ENCODE measurements at regions of chr12 and their contacts with region 1.

Region 1: DNA sequence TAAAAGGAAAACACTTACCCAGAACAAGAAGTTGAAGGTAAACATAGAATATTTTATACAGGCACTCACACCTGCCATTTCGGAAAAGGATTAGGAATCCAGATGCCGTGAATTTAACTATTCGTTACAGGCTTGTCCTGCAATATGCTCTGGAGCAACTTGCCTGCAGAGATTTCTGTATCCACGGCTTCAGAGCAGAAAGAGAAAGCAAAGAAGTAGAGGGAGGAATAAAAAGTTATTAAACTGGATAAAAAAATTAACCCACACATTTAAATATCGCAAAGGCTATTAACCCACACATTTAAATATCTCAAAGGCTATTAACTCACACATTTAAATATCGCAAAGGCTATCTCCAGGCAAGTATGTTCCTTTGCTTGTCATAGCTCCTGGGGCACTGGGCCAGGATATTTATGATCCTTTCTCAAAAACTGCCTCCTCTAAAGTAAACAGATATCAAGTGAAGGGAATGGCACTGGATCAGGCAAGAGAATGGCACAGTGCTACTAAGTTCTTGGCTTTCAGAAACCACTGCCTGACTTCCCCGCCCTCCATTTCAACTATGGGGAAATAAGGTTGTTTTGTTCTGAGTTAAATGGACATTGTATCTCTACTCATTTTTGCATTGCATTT is at the start of gene TSPAN8:
- DNase-seq: peak in 2 of 3 donors; percentile 26 to 93
- ATAC-seq: peak; percentile 73
- H3K4me3 ChIP-seq: peak within 1 kb of the TSS; percentile 23
- H3K4me1 ChIP-seq: peaks cover 30% of the 10 kb centered on the region
- CTCF ChIP-seq: no peak
- total RNA-seq, gene TSPAN8: 685 to 1,687 (median 1,460) TPM

Region 2: GRCh38 chr12:71216725-71217579 is 59.2 kb after region 1 on chr12:
- intact Hi-C with region 1: loop called in 1 of 2 experiments (anchors 5 kb)
- DNase-seq: peak in 2 of 3 donors; percentile 44 to 78
- ATAC-seq: peak; percentile 81
- H3K4me3 ChIP-seq: no peak overlapping the region
- H3K4me1 ChIP-seq: peaks cover 22% of the 10 kb centered on the region
- CTCF ChIP-seq: peak; percentile 30

Measured in mucosa of descending colon (tissue), 3 donors.